Sciatic nerve (tissue), 2 donors: ENCODE measurements at regions of chr9 and their contacts with region 1.

Region 1: DNA sequence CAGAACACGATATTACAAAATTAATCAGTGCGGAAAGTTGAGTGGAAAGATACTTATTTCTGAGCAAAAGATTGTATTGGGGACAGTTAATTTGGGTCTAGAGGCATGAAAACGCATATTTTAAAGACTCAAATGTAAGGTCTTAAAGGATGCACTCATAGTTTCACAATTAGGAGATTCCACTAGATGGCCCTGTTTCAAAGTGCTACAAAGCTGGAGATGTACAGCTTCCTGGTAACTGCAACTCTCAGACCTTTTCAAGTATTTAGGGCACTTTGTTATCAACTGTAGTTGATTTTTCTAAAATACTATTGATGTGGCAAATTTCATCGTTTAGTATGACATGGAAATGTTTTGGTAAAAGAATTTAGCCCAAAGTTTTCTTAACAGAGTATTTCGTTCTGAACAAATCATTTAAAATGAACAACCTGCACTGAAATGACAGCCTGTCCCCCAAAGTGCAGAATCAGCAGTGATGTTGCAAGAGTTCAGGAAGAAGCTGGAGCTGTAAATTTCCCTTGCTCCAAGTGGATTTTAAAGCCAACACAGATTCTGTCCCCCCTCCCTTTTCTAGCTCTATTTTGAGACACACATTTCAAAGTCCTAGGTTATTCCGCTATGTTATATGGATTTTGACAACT is 16.2 kb upstream of the NDUFB6 start:
- DNase-seq: no peak
- ATAC-seq: no peak

Region 2: DNA sequence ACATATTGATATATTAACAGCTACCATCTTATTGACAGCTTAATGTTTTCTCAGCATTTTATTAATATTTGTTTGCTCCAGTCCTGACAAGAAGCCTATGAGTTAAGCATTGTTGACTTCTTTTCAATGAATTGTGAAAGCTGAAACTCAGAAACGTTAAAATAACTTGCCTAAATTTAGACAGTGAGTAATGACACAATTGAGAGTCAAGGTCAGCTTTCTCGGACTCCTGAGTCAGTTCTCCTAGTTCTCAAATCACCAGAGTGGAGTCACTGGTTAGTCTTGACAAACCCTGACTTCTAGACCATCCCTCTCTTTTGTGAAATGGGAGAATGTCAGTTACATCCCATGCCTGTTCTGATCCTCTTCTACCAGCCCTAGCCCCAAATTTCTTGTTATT is 427.5 kb before region 1 on chr9:
- intact Hi-C with region 1: no loop called
- DNase-seq: no peak
- ATAC-seq: no peak

Region 3: GRCh38 chr9:32968101-32969011 is 379.2 kb after region 1 on chr9:
- intact Hi-C with region 1: loop called (anchors 5 kb)
- DNase-seq: peak; percentile 82
- ATAC-seq: peak; percentile 17